ENCODE measurements at regions of chr2 and their contacts with region 1.

Region 1: GRCh38 chr2:183038341-183039300 is at the start of gene NCKAP1:
- DNase-seq: peak; percentile 94
- ATAC-seq: peak; percentile 90
- H3K4me3 Mint-ChIP-seq: peak within 1 kb of the TSS; percentile 76
- H3K27ac Mint-ChIP-seq: peak within 1 kb of the TSS; percentile 63
- H3K4me1 Mint-ChIP-seq: peaks cover 26% of the 10 kb centered on the region
- H3K27me3 Mint-ChIP-seq: peaks cover 42% of the 10 kb centered on the region
- total RNA-seq, gene NCKAP1: 9.1 to 11.7 TPM

Region 2: DNA sequence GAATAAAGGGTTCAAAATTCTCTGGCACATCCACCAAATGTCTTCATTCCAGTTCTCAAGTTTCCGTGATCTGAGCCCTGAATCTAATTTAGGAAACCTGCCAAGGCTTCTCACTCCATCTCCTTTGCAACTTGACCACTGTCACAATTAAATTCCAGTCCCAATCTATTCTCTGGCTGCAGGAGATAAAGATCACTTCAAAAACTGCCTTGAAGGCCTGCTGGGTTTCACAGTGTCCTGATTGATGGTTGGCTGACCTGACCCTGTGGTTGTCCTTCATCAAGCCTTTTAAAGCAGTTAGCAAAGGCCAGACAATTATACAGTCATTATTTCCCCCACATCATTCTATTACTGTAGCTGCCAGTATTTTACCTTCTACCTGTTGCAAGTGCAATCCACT is 382.9 kb before region 1 on chr2:
- CTCF ChIA-PET with region 1: no interaction called
- POLR2A ChIA-PET with region 1: no interaction called
- intact Hi-C with region 1: no loop called
- DNase-seq: no peak
- ATAC-seq: no peak
- H3K4me3 Mint-ChIP-seq: no peak overlapping the region
- H3K27ac Mint-ChIP-seq: no peak overlapping the region
- H3K4me1 Mint-ChIP-seq: peaks cover 8% of the 10 kb centered on the region
- H3K27me3 Mint-ChIP-seq: peaks cover 9% of the 10 kb centered on the region

Region 3: GRCh38 chr2:182715896-182716668 is 322.5 kb before region 1 on chr2 and contains the start of gene DNAJC10:
- CTCF ChIA-PET with region 1: no interaction called
- POLR2A ChIA-PET with region 1: no interaction called
- intact Hi-C with region 1: loop called (anchors 1 to 5 kb)
- DNase-seq: peak; percentile 91
- ATAC-seq: peak; percentile 92
- H3K4me3 Mint-ChIP-seq: no peak within 1 kb of the TSS
- H3K27ac Mint-ChIP-seq: no peak within 1 kb of the TSS
- H3K4me1 Mint-ChIP-seq: peaks cover 3% of the 10 kb centered on the region
- H3K27me3 Mint-ChIP-seq: peaks cover under 1% of the 10 kb centered on the region
- total RNA-seq, gene DNAJC10: 41.7 to 48.9 TPM

Region 4: DNA sequence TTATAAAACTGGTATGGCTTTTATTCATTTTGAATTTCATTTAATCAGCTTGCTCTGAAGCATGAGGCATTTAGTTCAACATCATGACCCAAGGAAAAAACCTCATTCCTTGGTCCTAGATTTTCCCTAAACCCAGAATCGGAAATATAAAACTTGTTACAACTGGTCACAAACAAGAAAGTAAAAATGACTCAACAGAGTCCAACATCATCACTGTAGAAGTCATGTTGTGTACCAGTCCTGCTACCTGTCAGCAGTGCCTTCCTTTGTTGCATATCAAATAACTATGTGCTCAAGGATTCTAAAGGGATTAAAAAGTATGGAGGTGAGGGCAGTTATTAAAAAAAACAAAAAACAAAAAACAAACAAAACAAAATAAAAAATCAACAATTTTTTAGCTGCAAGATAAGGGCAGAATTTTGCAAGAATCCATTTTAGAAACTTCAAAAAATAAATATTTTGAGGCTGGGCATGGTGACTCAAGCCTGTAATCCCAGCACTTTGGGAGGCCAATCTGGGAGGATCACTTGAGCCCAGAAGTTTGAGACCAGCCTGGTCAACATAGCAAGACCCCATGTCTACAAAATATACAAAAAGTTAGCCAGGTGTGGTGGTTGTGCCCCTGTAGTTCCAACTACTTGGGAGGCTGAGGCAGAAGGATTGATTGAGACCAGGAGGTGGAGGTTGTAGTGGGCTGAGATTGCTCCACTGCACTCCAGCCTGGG is 18.7 kb before region 1 on chr2:
- CTCF ChIA-PET with region 1: no interaction called
- POLR2A ChIA-PET with region 1: no interaction called
- intact Hi-C with region 1: no loop called
- DNase-seq: no peak
- ATAC-seq: no peak
- H3K4me3 Mint-ChIP-seq: no peak overlapping the region
- H3K27ac Mint-ChIP-seq: no peak overlapping the region
- H3K4me1 Mint-ChIP-seq: no peaks in the 10 kb centered on the region
- H3K27me3 Mint-ChIP-seq: no peaks in the 10 kb centered on the region

Region 5: GRCh38 chr2:183057333-183057985 is 18.8 kb after region 1 on chr2:
- CTCF ChIA-PET with region 1: interaction called, 6 read pairs
- POLR2A ChIA-PET with region 1: no interaction called
- intact Hi-C with region 1: loop called in 1 of 2 experiments (anchors 2 kb)
- DNase-seq: no peak
- ATAC-seq: no peak
- H3K4me3 Mint-ChIP-seq: no peak overlapping the region
- H3K27ac Mint-ChIP-seq: no peak overlapping the region
- H3K4me1 Mint-ChIP-seq: peaks cover 6% of the 10 kb centered on the region
- H3K27me3 Mint-ChIP-seq: peaks cover 22% of the 10 kb centered on the region

Region 6: GRCh38 chr2:183078465-183079138 is 40.0 kb after region 1 on chr2 and contains the start of gene DUSP19:
- CTCF ChIA-PET with region 1: interaction called, 5 read pairs
- POLR2A ChIA-PET with region 1: no interaction called
- intact Hi-C with region 1: loop called (anchors 1 kb)
- DNase-seq: peak; percentile 89
- ATAC-seq: peak; percentile 94
- H3K4me3 Mint-ChIP-seq: peak within 1 kb of the TSS; percentile 84
- H3K27ac Mint-ChIP-seq: peak within 1 kb of the TSS; percentile 76
- H3K4me1 Mint-ChIP-seq: peaks cover 7% of the 10 kb centered on the region
- H3K27me3 Mint-ChIP-seq: no peaks in the 10 kb centered on the region
- total RNA-seq, gene DUSP19: 4.0 to 4.2 TPM

Region 7: DNA sequence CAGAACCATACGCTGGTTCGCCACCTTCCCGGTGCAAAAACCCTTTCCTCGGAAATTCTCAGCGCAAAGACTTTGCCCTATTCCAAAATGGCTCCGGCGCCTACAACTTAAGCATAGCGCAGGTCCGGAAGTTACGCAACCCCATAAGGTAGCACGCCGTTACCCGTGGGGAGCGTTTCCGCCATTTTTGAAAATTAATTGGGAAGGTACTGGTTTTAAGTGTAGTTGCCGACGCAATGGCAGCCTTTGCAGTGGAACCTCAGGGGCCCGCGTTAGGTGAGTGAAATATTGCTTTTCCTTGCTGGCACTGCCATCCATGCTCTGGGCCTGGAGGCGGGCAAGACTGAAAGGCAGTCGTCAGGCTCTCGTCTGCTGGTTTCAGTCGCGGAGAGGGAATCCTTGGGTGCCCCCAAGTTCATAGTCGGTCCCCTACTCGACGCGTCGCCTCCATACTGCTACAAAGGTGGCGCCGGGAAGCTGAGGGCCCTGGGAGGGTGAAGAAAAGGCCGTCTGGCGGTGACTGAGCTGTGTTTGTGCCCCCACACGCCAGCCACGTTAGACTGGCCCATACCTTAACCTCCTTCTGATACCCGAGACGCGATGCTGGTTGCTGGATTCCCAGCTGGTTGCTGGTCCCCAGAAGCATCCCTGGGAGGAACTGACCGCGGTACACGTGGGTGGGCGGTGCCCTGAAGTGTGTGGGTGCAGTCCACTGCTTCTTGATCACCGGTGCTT is 85.8 kb after region 1 on chr2 and contains the start of gene NUP35:
- CTCF ChIA-PET with region 1: interaction called, 5 read pairs
- POLR2A ChIA-PET with region 1: no interaction called
- intact Hi-C with region 1: loop called (anchors 1 to 2 kb)
- DNase-seq: peak; percentile 89
- ATAC-seq: peak; percentile 94
- H3K4me3 Mint-ChIP-seq: peak within 1 kb of the TSS; percentile 96
- H3K27ac Mint-ChIP-seq: peak within 1 kb of the TSS; percentile 97
- H3K4me1 Mint-ChIP-seq: peaks cover 25% of the 10 kb centered on the region
- H3K27me3 Mint-ChIP-seq: peaks cover 7% of the 10 kb centered on the region
- total RNA-seq, gene NUP35: 36.0 to 50.5 TPM